Breast epithelium (tissue), 4 donors: ENCODE measurements at regions of chr12 and their contacts with region 1.

Region 1: DNA sequence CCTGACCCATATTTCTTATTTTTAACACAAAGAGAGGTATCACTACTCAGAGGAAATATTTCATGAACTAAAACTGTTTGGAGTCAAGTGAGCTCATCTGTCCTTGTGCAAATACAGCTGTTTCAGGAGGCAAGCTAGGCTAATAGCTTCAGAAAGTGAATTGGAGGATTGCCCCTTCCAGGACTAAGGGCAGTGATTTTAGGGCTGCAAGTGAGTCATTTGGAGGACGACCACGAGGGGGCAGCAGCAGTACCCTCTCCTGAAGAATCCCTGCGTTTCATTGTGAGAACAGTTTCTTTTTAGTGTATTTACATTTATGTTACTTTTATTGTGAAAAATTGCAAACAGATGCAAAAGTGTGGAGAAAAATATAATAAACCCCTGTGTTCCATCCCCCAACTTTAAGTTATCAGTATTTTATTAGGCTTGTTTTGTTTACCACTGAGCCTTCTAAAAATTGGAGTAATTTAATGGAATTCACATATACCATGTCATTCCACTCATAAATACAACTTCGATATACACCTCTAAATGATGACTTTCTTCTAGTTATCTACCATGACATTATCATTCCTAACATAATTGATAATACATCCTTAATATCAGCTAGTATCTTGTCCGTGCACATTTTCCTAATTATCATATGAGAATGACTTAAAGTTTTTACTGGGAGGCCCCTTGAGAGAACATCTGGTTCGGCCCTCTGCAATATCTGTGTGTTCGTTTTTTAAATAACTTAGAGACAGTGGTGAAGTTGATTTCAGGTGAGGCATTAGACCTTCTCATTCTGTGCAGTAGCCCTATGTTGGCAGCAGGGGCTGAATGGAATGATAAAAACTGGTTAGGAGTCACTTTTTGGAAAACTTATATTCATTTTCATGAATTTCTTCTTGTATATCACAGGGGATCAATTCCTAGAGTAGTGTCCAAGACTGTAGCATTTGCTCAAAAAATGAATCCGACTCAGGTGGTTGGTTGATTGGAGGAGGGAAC is 13.7 kb downstream of the FOXJ2 start:
- DNase-seq: peak; percentile 59 to 71
- H3K4me3 ChIP-seq: no peak overlapping the region
- H3K27ac ChIP-seq: no peak overlapping the region
- H3K4me1 ChIP-seq: no peaks in the 10 kb centered on the region
- H3K27me3 ChIP-seq: no peaks in the 10 kb centered on the region
- CTCF ChIP-seq: peak in 2 of 3 donors; percentile 62 to 74
- POLR2A ChIP-seq: no peak

Region 2: DNA sequence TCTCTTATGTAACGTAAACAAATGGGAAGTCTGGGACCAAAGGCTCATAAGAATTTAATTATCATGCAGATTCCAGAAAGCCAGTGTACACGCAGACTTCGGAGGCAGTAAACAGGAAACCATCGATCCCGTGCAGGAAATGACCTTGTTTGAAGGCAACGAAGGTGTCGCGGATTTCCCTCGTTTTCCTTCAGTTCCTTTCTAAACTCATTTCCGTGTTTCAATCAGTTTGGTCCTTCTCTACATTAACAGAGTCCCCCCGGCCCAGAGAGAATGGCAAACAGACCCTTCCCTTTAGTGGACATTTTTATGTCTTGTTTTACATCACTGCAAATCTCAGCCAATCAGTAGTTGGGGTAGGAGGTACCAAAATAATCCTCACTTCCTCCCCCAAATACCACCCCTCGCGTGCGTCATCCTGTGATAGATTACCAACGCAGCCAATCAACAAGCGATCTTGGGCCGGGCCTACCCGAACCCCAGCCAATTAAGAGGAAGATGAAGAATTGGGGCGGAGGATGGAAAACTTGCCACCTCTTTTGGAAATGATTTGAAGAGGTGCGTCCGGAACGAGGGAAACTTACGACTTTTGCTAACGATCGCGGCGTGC is 19.9 kb before region 1 on chr12:
- intact Hi-C with region 1: loop called (anchors 1 kb)
- DNase-seq: peak; percentile 97 to 99
- H3K4me3 ChIP-seq: peak overlapping the region; percentile 69 to 89 (median 83)
- H3K27ac ChIP-seq: peak overlapping the region; percentile 100
- H3K4me1 ChIP-seq: no peaks in the 10 kb centered on the region
- H3K27me3 ChIP-seq: no peaks in the 10 kb centered on the region
- CTCF ChIP-seq: peak in 1 of 3 donors; percentile 28
- POLR2A ChIP-seq: peak; percentile 60